MCF 10A (cell line): ENCODE measurements at regions of chr15 and their contacts with region 1.

Region 1: DNA sequence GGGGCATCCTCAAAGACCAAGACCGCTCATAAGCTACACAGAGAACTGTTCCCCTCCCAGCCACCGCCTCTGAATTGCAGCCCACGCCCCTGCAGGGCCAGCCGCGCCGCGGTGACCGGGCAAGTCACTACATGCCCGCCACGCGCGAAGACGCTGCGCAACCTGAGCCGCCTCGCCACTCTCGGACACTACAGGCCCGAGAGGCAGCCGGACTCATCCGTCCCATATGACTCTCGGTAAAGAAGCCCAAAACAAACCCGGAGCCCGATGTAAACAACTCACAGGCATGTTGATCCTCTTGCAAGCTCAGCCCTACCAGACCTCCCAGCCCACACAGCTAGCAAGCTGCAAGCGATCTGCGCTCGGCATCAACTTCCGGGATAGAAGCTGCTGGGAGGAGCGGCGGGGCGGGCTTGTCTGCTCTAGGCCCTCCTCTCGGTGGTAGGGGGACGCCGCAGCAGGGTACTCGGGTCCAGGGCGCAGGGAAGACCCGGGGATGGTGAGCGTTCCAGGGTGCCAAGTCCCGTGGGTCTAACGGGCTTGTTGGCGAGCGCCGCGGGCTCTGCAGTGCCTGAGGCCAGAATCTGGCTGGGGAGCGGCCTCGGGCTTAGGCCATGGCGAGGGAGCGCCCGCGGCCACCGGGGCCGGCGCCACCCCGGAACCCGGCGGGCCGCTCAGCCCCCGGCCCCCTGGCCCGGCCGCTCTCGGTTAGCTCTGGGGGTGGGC is at the start of gene RPS27L:
- DNase-seq: peak; percentile 91
- H3K4me3 Mint-ChIP-seq: peak within 1 kb of the TSS; percentile 92
- H3K27ac Mint-ChIP-seq: peak within 1 kb of the TSS; percentile 98
- H3K4me1 Mint-ChIP-seq: no peaks in the 10 kb centered on the region
- H3K27me3 Mint-ChIP-seq: no peaks in the 10 kb centered on the region
- CTCF ChIP-seq: no peak
- total RNA-seq, gene RPS27L: 154 and 172 TPM in 2 replicates

Region 2: GRCh38 chr15:62886431-62887071 is 270.7 kb before region 1 on chr15:
- CTCF ChIA-PET with region 1: no interaction called
- POLR2A ChIA-PET with region 1: no interaction called
- intact Hi-C with region 1: no loop called
- DNase-seq: no peak
- H3K4me3 Mint-ChIP-seq: no peak overlapping the region
- H3K27ac Mint-ChIP-seq: no peak overlapping the region
- H3K4me1 Mint-ChIP-seq: peaks cover 17% of the 10 kb centered on the region
- H3K27me3 Mint-ChIP-seq: no peaks in the 10 kb centered on the region
- CTCF ChIP-seq: no peak

Region 3: GRCh38 chr15:63121382-63122001 is 35.8 kb before region 1 on chr15 and contains the start of gene LACTB:
- CTCF ChIA-PET with region 1: no interaction called
- POLR2A ChIA-PET with region 1: interaction called, 5 read pairs
- intact Hi-C with region 1: loop called (anchors 1 kb)
- DNase-seq: peak; percentile 89
- H3K4me3 Mint-ChIP-seq: peak within 1 kb of the TSS; percentile 69
- H3K27ac Mint-ChIP-seq: peak within 1 kb of the TSS; percentile 94
- H3K4me1 Mint-ChIP-seq: peaks cover 8% of the 10 kb centered on the region
- H3K27me3 Mint-ChIP-seq: no peaks in the 10 kb centered on the region
- CTCF ChIP-seq: no peak
- total RNA-seq, gene LACTB: 9.9 and 16.3 TPM in 2 replicates

Region 4: GRCh38 chr15:63188926-63189871 is 31.9 kb after region 1 on chr15 and contains the start of gene RAB8B:
- CTCF ChIA-PET with region 1: no interaction called
- POLR2A ChIA-PET with region 1: interaction called, 24 read pairs
- intact Hi-C with region 1: no loop called
- DNase-seq: peak; percentile 94
- H3K4me3 Mint-ChIP-seq: peak within 1 kb of the TSS; percentile 74
- H3K27ac Mint-ChIP-seq: peak within 1 kb of the TSS; percentile 20
- H3K4me1 Mint-ChIP-seq: peaks cover 40% of the 10 kb centered on the region
- H3K27me3 Mint-ChIP-seq: no peaks in the 10 kb centered on the region
- CTCF ChIP-seq: no peak
- total RNA-seq, gene RAB8B: 11.7 and 15.6 TPM in 2 replicates

Region 5: GRCh38 chr15:63277038-63277892 is 120.0 kb after region 1 on chr15 and contains the start of gene APH1B:
- CTCF ChIA-PET with region 1: interaction called, 4 read pairs
- POLR2A ChIA-PET with region 1: interaction called, 44 read pairs
- intact Hi-C with region 1: loop called (anchors 1 kb)
- DNase-seq: peak; percentile 62
- H3K4me3 Mint-ChIP-seq: peak within 1 kb of the TSS; percentile 78
- H3K27ac Mint-ChIP-seq: peak within 1 kb of the TSS; percentile 55
- H3K4me1 Mint-ChIP-seq: peaks cover 10% of the 10 kb centered on the region
- H3K27me3 Mint-ChIP-seq: no peaks in the 10 kb centered on the region
- CTCF ChIP-seq: no peak
- total RNA-seq, gene APH1B: 5.2 and 8.2 TPM in 2 replicates

Region 6: DNA sequence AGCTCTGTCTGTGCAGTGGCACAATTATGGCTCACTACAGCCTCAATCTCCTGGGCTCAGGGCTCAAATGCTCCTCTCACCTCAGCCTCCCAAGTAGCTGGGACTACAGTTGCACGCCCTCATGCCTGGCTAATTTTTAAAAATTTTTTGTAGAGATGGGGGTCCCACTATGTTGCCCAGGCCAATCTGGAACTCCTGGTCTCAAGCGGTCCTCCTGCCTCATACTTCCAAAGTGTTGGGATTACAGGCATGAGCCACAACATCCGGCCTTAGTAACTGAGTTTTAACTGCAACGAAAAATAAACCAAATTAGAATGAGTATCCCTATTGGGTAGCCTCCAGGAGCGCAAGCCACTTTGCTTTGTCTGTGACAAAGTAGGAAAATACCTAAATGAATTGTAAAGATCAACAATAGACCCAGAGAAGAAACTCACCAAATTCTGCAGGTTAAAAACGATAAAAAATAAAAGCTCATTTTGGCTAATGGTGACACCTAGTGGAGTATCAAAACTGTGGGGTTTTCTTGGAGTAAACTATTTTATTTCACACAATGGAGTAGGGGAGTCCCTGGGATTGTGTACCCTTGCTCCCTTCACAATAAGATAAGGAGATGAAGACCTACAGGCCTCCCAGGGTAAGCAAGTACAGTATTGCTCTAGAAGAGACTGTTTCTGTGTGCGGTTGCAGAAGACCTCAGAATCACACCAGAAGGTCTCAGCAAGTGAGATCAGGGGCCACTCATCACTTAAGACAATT is 245.4 kb after region 1 on chr15:
- CTCF ChIA-PET with region 1: interaction called, 3 read pairs
- POLR2A ChIA-PET with region 1: no interaction called
- intact Hi-C with region 1: loop called (anchors 5 kb)
- DNase-seq: peak; percentile 58
- H3K4me3 Mint-ChIP-seq: no peak overlapping the region
- H3K27ac Mint-ChIP-seq: no peak overlapping the region
- H3K4me1 Mint-ChIP-seq: peaks cover 6% of the 10 kb centered on the region
- H3K27me3 Mint-ChIP-seq: no peaks in the 10 kb centered on the region
- CTCF ChIP-seq: peak; percentile 59